ENCODE measurements at regions of chr2 and their contacts with region 1.

Region 1: DNA sequence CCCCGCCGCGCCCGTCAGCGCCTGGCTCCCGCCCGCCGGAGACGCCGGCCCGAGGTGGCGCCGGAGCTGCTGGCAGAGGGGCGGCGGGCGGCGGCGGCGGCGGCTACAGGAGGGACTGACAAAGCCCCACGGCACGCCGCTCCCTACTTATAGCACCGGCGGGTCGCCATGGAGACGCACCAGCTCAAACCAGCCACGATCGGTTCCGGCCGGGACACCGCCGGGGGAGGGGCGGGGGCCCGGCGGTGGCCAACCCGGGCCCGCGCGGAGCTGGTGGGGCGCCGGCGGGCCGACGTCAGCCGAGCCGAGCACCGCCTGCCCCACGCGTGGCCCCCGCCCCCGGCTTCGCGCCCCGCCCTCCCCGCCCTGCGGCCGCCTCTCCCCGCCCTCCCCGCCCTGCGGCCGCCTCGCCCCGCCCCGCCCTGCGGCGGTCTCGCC is at the start of gene ODC1:
- DNase-seq: peak; percentile 95
- H3K4me3 Mint-ChIP-seq: peak within 1 kb of the TSS; percentile 83
- H3K27ac Mint-ChIP-seq: peak within 1 kb of the TSS; percentile 88
- H3K4me1 Mint-ChIP-seq: peaks cover 50% of the 10 kb centered on the region
- H3K27me3 Mint-ChIP-seq: no peaks in the 10 kb centered on the region
- total RNA-seq, gene ODC1: 138 to 142 TPM

Region 2: DNA sequence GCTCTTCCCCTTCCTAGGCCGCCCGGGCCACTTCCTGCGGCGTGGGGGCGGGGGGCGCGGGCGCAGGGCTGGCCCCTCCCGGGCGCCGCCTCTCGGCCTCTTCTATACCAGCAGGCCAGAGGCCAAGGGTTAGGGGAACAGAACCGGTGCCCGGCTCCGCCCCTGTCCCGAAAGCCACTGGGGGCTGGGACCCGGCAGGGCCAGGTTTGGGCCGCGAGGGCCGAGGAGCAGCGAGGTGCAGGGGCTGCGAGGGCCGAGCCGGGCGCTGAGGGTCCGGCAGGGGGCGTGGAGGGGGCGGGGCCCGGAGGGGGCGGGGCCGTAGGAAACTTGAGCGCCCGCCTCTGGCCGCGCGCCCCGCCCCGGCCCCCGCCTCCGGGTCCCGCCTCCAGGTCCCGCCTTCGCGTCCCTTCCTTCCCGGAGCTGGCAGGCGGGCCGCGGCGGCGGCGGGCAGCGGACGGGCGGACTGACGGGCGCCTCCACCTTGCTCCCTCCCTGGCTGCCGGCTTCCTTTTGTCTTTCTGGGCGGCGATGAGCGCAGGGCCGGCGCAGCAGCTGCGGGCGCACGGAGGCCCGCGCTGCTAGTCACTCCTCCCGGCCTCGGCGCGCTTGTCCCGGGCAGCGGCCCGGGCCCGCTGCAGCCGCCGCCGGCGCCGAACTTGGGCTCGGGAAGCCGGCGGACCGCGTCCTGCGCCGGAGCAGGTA is 145.6 kb before region 1 on chr2 and contains the start of gene HPCAL1:
- CTCF ChIA-PET with region 1: interaction called, 4 read pairs
- POLR2A ChIA-PET with region 1: interaction called, 6 read pairs
- intact Hi-C with region 1: loop called (anchors 2 kb)
- DNase-seq: peak; percentile 88
- H3K4me3 Mint-ChIP-seq: peak within 1 kb of the TSS; percentile 99
- H3K27ac Mint-ChIP-seq: peak within 1 kb of the TSS; percentile 83
- H3K4me1 Mint-ChIP-seq: peaks cover 72% of the 10 kb centered on the region
- H3K27me3 Mint-ChIP-seq: no peaks in the 10 kb centered on the region
- total RNA-seq, gene HPCAL1: 82.2 to 82.6 TPM

Region 3: DNA sequence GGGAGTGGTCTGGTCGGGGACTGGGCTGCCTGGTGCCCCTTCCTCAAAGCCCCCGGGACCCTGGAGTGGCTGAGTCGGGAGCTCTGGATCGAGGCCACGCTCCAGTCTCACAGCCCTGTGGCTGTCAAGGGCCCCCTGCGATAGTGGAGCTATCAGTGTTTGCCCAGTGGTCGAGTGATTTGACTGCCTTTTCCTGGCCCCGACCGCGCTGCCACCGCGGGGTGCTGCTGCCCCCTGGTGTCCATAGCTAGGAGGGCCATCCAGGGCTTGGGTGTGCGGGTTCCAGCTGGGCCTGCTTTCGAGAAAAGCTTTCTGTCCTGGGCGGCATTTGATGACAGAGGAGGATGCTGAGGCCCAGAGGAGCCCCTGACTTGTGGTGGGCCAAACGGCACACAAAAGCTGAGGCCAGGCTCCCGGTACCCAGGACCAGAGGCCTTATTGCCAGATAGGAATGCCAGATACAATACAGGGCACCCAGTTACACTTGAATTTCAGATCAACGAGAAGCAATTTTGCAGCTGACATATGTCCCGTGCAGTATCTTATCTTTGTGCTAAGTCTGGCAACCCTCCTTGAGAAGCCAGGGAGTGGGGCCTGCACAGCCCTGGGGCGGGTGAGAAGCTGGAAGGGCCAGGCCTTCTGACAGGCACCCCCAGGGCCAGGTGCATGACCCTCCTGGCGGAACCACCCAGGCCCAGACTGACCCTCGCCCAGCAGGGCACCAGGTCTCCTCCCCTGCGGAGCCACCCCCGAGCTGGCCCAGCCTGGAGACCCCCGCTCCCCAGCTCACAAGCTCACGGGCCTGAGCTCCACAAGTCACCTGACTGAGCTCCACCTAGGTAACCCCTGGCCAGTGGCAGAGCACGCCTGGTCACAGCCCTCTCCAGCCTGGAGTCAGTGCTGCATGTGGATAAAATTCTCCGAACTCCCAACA is 13.1 kb before region 1 on chr2:
- CTCF ChIA-PET with region 1: interaction called, 44 read pairs
- POLR2A ChIA-PET with region 1: interaction called, 11 read pairs
- intact Hi-C with region 1: no loop called
- DNase-seq: peak; percentile 80
- H3K4me3 Mint-ChIP-seq: no peak overlapping the region
- H3K27ac Mint-ChIP-seq: no peak overlapping the region
- H3K4me1 Mint-ChIP-seq: peaks cover 12% of the 10 kb centered on the region
- H3K27me3 Mint-ChIP-seq: peaks cover 13% of the 10 kb centered on the region

Region 4: DNA sequence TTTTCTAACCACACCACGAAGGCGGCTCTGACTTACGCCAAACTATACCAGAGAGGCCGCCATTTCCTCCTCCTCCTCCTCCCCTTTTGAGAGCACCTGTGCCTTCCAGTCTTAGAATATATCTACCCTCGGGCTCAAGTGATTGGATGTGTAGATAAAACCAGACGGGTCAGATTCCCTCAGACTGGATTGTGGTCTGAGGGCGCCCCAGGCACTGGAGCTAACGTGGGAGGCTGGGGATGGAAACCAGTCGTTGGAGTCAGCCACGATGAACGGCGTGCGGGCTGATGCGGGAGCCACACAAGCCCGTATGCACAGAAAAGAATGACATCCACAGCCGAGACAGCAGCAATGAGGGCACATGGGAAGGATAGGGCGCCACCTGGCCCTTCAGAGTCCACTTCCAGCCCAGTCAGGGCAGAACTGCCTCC is 12.2 kb after region 1 on chr2:
- CTCF ChIA-PET with region 1: no interaction called
- POLR2A ChIA-PET with region 1: no interaction called
- intact Hi-C with region 1: no loop called
- DNase-seq: no peak
- H3K4me3 Mint-ChIP-seq: no peak overlapping the region
- H3K27ac Mint-ChIP-seq: no peak overlapping the region
- H3K4me1 Mint-ChIP-seq: peaks cover 5% of the 10 kb centered on the region
- H3K27me3 Mint-ChIP-seq: peaks cover 14% of the 10 kb centered on the region

Region 5: GRCh38 chr2:10532638-10533101 is 84.4 kb after region 1 on chr2:
- CTCF ChIA-PET with region 1: no interaction called
- POLR2A ChIA-PET with region 1: no interaction called
- intact Hi-C with region 1: no loop called
- DNase-seq: no peak
- H3K4me3 Mint-ChIP-seq: no peak overlapping the region
- H3K27ac Mint-ChIP-seq: no peak overlapping the region
- H3K4me1 Mint-ChIP-seq: peaks cover 12% of the 10 kb centered on the region
- H3K27me3 Mint-ChIP-seq: peaks cover 3% of the 10 kb centered on the region

Region 6: GRCh38 chr2:10544252-10544651 is 96.0 kb after region 1 on chr2:
- CTCF ChIA-PET with region 1: no interaction called
- POLR2A ChIA-PET with region 1: no interaction called
- intact Hi-C with region 1: loop called (anchors 2 kb)
- DNase-seq: peak; percentile 53
- H3K4me3 Mint-ChIP-seq: no peak overlapping the region
- H3K27ac Mint-ChIP-seq: no peak overlapping the region
- H3K4me1 Mint-ChIP-seq: peaks cover 18% of the 10 kb centered on the region
- H3K27me3 Mint-ChIP-seq: peaks cover 18% of the 10 kb centered on the region

Region 7: DNA sequence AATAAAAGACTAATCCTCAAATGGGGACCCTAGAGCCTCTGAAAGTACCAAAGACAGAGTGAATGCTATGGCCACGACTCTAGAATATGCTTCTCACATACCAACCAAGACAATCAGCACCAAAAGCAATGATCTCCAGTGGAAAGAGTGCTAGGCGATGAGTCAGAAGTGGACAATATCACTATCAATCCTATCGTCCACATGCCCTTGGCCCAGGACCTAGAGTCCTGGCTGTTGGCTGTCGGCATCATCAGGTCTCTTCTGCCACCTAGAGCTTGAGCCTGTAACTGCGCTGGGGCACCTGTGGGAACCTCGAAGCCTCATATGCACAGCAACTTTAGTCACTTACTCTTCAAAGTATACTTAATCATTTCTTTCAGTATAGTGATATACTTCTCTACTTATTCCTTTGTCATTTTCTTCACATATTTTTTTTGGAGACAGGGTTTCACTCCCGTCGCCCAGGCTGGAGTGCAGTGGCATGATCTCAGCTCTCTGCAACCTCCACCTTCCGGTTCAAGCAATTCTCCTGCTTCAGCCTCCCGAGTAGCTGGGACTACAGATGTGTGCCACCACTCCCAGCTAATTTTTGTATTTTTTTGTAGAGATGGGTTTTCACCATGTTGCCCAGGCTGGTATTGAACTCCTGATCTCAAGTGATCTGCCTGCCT is 211.8 kb after region 1 on chr2:
- CTCF ChIA-PET with region 1: interaction called, 4 read pairs
- POLR2A ChIA-PET with region 1: no interaction called
- intact Hi-C with region 1: loop called (anchors 1 kb)
- DNase-seq: peak; percentile 69
- H3K4me3 Mint-ChIP-seq: no peak overlapping the region
- H3K27ac Mint-ChIP-seq: no peak overlapping the region
- H3K4me1 Mint-ChIP-seq: peaks cover 16% of the 10 kb centered on the region
- H3K27me3 Mint-ChIP-seq: no peaks in the 10 kb centered on the region

Measured in activated CD4-positive, alpha-beta memory T cell treated with anti-CD3 and anti-CD28 coated beads for 36 hours (primary cell).